ENCODE measurements at regions of chr3 and their contacts with region 1.

Region 1: GRCh38 chr3:174376346-174376745 is 482.8 kb upstream of the NAALADL2 start:
- DNase-seq: no peak

Region 2: DNA sequence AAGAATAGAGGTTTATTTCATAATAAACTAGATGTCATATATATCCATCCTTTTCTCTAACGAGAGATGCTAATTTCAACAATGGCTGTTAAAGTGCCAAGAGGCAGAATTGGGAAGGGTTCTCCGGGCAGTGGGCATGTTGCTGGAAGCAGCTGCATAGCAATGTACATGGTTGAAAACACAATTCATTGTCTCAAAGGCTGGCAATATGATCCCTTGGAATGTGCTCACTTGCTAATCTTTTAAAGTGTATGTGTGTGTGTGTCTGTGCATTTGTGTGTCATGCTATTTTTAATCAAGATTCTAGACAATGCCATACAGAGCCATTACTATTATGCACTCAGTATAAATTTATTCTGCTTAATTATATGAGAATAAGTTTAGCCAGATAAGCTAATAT is 1503.1 kb after region 1 on chr3:
- intact Hi-C with region 1: loop called in 1 of 2 experiments (anchors 5 kb)
- DNase-seq: no peak

Measured in posterior vena cava (tissue), 2 donors.